H1 (cell line): ENCODE measurements at regions of chr12 and their contacts with region 1.

Region 1: DNA sequence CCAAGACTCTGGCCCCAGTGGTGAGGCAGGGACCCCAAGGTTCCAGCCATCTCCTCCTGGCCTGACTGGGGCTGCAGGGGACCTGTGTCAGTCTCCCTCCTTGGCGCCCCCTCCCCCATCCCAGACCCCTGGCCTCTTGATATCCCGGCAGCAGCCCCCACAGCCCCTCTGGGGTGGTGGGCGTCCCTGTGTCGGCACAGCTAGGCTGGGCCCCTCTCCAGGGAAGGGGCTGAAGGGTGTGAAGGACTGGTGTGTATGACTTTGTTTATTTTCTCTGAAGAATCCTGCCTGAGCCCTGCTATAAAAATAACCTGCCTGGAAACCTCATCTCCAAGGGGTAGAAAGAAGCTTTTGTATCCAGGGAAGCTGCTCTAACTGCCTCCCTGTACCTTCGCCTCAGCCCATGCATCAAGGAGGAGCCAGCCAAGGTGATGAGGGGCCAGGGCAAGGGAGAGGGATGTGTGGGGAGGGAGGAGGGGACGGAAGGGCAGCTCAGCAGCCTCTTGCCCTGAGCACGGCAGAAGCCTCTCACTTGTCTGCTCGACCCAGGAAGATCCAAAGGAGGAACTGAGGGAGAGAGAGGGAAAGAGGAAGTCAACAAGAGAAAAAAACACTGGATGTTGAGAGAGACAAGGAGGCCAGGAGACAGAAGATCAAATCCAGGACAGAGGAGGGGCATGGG is 25.4 kb upstream of the COL2A1 start:
- DNase-seq: no peak
- H3K4me3 ChIP-seq: no peak overlapping the region
- H3K27ac ChIP-seq: no peak overlapping the region
- H3K4me1 ChIP-seq: peaks cover 0 to 7% (median 3%) of the 10 kb centered on the region in 4 experiments; a peak in 5 of 7 replicates
- H3K27me3 ChIP-seq: peaks cover 46 to 92% (median 85%) of the 10 kb centered on the region in 4 experiments
- CTCF ChIP-seq: no peak
- EP300 ChIP-seq: no peak
- POLR2A ChIP-seq: no peak
- RAD21 ChIP-seq: no peak

Region 2: DNA sequence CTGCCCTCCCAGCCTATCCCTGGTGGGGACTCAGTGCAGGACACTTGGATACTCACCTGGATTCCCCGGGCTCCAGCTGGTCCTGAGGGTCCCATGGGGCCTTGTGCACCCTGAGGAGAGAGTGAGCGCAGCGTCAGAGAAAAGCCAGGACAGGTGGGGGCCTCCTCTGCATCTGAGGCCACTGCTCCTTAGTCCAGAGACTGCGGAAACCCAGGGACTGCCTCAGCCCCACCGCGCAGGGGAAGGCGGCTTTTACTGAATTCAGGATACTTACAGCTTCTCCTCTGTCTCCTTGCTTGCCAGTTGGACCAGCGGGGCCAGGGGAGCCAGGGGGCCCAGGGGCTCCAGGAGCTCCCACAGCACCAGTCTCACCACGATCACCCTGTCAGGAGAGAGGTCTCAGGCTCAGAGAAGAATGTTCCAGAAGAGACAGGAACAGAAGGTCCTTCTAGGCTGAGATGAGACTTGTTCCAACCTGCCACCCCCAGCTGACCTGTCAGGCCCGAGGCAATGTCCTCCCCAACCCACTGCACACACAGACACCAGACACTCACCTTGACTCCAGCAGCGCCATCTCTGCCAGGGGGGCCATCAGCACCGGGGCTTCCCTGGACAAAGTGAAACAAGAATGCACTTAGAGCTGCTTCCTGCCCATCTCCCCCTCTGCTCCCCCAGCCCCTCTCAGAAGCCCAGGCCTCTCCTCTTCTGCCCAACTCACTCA is 52.4 kb before region 1 on chr12:
- CTCF ChIA-PET with region 1: no interaction called
- POLR2A ChIA-PET with region 1: no interaction called
- DNase-seq: no peak
- H3K4me3 ChIP-seq: no peak overlapping the region
- H3K27ac ChIP-seq: no peak overlapping the region
- H3K4me1 ChIP-seq: no peaks in the 10 kb centered on the region
- H3K27me3 ChIP-seq: no peaks in the 10 kb centered on the region; a peak in 3 of 7 replicates
- CTCF ChIP-seq: no peak
- EP300 ChIP-seq: no peak
- POLR2A ChIP-seq: no peak
- RAD21 ChIP-seq: no peak

Region 3: DNA sequence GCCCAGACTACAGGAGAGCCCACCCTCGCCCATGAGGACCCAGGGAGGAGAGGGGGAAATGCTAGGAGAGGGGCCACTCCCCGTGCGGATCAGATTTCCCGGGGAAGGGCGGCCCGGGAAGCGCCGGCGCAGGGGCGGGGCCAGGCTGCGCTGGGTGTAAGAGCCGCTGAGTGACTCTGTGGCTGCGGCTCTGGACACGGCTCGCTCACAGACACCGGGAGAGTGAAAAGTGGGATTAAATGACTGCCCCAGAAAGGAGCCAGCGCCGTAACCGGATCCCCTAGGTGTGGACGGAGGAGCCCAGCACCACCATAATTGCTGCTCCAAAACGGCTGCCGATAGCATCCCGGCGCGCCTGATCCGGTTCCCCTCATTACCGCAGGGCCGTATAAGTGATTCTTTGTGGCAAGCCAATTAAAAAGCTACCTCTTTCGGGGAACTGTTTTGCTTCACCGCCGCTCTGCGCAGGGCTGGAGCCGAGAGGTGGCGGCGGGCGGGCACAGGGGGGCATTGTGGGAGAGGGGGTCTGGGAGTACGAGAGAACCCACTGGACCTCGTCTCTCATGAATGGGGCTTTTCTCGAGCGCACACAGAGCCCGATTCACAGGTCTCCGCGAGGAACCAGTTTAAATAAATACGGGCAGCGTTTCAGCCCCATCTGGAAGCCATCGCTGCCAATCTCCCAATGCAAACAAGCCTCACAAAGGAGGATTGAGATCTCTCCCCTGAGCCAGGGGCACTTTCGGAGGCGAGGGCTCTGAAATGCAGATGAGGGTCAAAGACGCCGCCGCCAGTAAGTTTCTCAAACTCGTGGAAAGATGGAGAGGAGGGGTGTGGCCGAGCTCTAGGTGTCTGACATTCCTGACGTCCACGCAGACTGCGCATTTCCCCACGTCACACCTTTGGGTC is 27.9 kb before region 1 on chr12:
- CTCF ChIA-PET with region 1: interaction called, 11 read pairs
- POLR2A ChIA-PET with region 1: interaction called, 5 read pairs
- DNase-seq: peak in 1 of 2 experiments; percentile 81
- H3K4me3 ChIP-seq: peak overlapping the region; percentile 24 to 60 (median 44); a peak in 7 of 8 replicates
- H3K27ac ChIP-seq: no peak overlapping the region
- H3K4me1 ChIP-seq: peaks cover 21 to 34% (median 24%) of the 10 kb centered on the region in 4 experiments
- H3K27me3 ChIP-seq: peaks cover 60 to 98% (median 97%) of the 10 kb centered on the region in 4 experiments
- CTCF ChIP-seq: no peak
- EP300 ChIP-seq: no peak
- POLR2A ChIP-seq: no peak
- RAD21 ChIP-seq: no peak

Region 4: GRCh38 chr12:48050174-48050573 is 20.5 kb after region 1 on chr12:
- CTCF ChIA-PET with region 1: interaction called, 10 read pairs
- POLR2A ChIA-PET with region 1: no interaction called
- DNase-seq: no peak
- H3K4me3 ChIP-seq: no peak overlapping the region
- H3K27ac ChIP-seq: no peak overlapping the region
- H3K4me1 ChIP-seq: no peaks in the 10 kb centered on the region
- H3K27me3 ChIP-seq: no peaks in the 10 kb centered on the region
- CTCF ChIP-seq: no peak
- EP300 ChIP-seq: no peak
- POLR2A ChIP-seq: no peak
- RAD21 ChIP-seq: no peak

Region 5: DNA sequence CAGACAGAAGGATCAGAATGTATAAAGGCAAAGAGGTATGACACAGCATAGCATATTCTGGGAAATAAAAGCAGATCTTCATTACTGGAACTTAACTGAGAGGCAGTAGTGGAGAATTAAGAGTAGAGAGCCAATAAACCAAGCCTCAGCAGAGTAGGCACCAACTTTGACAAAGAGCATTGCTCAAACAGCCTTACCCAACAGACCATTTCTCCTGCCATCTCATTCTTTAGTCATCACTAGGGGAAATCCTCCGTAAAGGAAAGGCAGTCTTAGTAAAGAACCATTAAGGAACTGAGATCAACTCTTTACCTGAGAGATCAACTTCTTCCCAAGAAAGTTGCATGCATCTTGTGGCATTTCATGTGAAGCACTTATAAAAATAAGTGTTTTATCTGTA is 39.6 kb after region 1 on chr12:
- CTCF ChIA-PET with region 1: no interaction called
- POLR2A ChIA-PET with region 1: no interaction called
- DNase-seq: no peak
- H3K4me3 ChIP-seq: no peak overlapping the region
- H3K27ac ChIP-seq: no peak overlapping the region
- H3K4me1 ChIP-seq: no peaks in the 10 kb centered on the region
- H3K27me3 ChIP-seq: peaks cover 0 to 1% (median 0%) of the 10 kb centered on the region in 4 experiments; a peak in 1 of 7 replicates
- CTCF ChIP-seq: no peak
- EP300 ChIP-seq: no peak
- POLR2A ChIP-seq: no peak
- RAD21 ChIP-seq: no peak

Region 6: GRCh38 chr12:48131517-48131916 is 101.9 kb after region 1 on chr12:
- CTCF ChIA-PET with region 1: no interaction called
- POLR2A ChIA-PET with region 1: no interaction called
- DNase-seq: no peak
- H3K4me3 ChIP-seq: no peak overlapping the region
- H3K27ac ChIP-seq: no peak overlapping the region
- H3K4me1 ChIP-seq: no peaks in the 10 kb centered on the region
- H3K27me3 ChIP-seq: no peaks in the 10 kb centered on the region
- CTCF ChIP-seq: no peak
- EP300 ChIP-seq: no peak
- POLR2A ChIP-seq: no peak
- RAD21 ChIP-seq: no peak